CD4-positive, alpha-beta memory T cell (primary cell): ENCODE measurements at regions of chr22 and their contacts with region 1.

Region 1: DNA sequence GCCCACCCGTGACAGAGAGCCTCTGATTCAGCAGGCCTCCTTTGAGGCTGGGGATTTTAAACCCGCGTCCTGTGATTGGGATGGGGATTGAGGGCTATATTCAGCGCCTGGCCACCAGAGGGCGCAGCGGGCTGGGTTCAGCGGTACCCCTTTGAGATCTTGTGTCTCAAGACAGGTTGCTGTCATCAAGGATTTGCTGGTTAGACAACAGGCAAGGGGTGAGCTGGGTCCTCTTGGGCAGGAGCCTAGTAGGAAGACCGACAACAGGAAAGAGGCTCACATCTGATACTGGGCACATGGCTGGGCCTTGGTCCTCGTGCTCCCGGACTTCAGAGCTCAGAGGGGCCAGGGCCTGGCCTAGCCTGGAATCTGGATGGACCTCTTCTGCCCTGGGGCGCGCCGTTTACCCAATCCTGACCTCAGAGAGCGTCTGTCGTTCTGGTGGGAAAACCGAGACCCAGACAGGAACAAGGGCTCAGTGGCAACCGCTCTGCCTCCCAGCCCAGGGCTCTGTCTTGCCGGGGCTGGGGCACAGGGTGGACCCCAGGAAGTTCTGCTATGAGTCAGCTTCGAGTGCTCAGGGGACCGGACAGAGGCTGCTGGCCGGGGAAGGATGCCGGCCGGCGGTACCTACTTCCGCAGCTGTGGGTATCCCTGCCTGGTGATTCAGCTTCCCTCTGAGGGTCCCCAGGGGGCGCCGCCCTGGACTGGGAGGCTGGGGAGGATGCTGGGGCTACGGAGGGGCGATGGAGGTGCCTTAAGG is 929 bp upstream of the SLC35E4 start:
- DNase-seq: peak; percentile 84 to 87 (median 86)
- H3K4me3 ChIP-seq: peak overlapping the region; percentile 81 to 91
- H3K4me3 Mint-ChIP-seq: peak overlapping the region; percentile 81 to 95 (median 84)
- H3K27ac ChIP-seq: peak overlapping the region; percentile 79
- H3K27ac Mint-ChIP-seq: peak overlapping the region; percentile 88 to 98 (median 93)
- H3K4me1 ChIP-seq: peaks cover 34% of the 10 kb centered on the region
- H3K4me1 Mint-ChIP-seq: peaks cover 10 to 29% (median 16%) of the 10 kb centered on the region in 4 donors
- H3K27me3 ChIP-seq: no peaks in the 10 kb centered on the region
- H3K27me3 Mint-ChIP-seq: no peaks in the 10 kb centered on the region

Region 2: DNA sequence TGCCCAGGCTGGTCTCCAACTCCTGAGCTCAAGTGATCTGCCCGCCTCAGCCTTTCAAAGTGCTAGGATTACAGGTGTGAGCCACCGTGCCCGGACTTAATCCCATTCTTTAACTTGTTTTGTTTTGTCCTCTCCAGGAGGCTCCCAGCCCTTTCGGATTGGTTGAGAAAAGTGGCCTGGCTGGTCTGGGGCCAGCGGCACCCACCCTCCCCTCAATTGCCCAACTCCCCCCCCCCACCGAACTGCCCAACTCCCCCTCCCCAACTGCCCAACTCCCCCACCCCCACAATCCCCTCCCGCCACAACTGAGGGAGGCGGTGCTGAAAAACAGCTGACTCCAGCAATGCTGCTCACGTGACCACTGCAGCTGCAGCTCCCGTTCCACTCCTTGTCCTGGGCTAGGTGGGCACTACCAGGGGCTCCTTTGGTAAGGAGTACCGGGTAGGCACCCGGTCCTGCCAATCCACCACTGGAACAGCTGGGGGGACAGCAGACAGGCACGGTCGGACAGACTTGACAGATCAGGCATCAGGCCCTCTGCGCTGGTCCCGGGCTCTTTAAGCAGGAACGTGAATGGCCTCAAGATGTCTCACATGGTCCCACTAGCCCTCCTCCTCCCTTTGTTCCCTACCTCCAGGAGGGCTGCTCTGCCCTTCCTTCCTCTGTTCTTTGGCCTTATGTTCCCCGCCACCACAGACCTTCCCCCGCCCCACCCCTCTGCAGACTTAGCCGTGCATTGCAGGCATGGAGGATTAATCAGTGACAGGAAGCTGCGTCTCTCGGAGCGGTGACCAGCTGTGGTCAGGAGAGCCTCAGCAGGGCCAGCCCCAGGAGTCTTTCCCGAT is 28.0 kb before region 1 on chr22 and contains the start of gene TCN2:
- CTCF ChIA-PET with region 1: interaction called, 14 read pairs
- POLR2A ChIA-PET with region 1: interaction called, 11 read pairs
- intact Hi-C with region 1: no loop called
- DNase-seq: peak; percentile 13 to 57 (median 18)
- H3K4me3 ChIP-seq: peak within 1 kb of the TSS; percentile 57 to 81
- H3K4me3 Mint-ChIP-seq: peak within 1 kb of the TSS; percentile 86 to 94 (median 90)
- H3K27ac ChIP-seq: no peak within 1 kb of the TSS
- H3K27ac Mint-ChIP-seq: peak within 1 kb of the TSS in 6 of 7 donors; percentile 50 to 92 (median 64)
- H3K4me1 ChIP-seq: peaks cover 16% of the 10 kb centered on the region
- H3K4me1 Mint-ChIP-seq: peaks cover 11 to 30% (median 20%) of the 10 kb centered on the region in 4 donors
- H3K27me3 ChIP-seq: no peaks in the 10 kb centered on the region
- H3K27me3 Mint-ChIP-seq: peaks cover 0 to 1% of the 10 kb centered on the region in 2 donors
- total RNA-seq, gene TCN2: 0.93 to 1.2 TPM

Region 3: GRCh38 chr22:30673136-30673535 is 38.5 kb after region 1 on chr22:
- CTCF ChIA-PET with region 1: interaction called, 22 read pairs
- POLR2A ChIA-PET with region 1: interaction called, 24 read pairs
- intact Hi-C with region 1: no loop called
- DNase-seq: no peak
- H3K4me3 ChIP-seq: no peak overlapping the region
- H3K4me3 Mint-ChIP-seq: no peak overlapping the region
- H3K27ac ChIP-seq: no peak overlapping the region
- H3K27ac Mint-ChIP-seq: no peak overlapping the region
- H3K4me1 ChIP-seq: peaks cover 5% of the 10 kb centered on the region
- H3K4me1 Mint-ChIP-seq: peaks cover 4 to 6% (median 4%) of the 10 kb centered on the region in 4 donors
- H3K27me3 ChIP-seq: no peaks in the 10 kb centered on the region
- H3K27me3 Mint-ChIP-seq: peaks cover 8% of the 10 kb centered on the region in 2 donors

Region 4: DNA sequence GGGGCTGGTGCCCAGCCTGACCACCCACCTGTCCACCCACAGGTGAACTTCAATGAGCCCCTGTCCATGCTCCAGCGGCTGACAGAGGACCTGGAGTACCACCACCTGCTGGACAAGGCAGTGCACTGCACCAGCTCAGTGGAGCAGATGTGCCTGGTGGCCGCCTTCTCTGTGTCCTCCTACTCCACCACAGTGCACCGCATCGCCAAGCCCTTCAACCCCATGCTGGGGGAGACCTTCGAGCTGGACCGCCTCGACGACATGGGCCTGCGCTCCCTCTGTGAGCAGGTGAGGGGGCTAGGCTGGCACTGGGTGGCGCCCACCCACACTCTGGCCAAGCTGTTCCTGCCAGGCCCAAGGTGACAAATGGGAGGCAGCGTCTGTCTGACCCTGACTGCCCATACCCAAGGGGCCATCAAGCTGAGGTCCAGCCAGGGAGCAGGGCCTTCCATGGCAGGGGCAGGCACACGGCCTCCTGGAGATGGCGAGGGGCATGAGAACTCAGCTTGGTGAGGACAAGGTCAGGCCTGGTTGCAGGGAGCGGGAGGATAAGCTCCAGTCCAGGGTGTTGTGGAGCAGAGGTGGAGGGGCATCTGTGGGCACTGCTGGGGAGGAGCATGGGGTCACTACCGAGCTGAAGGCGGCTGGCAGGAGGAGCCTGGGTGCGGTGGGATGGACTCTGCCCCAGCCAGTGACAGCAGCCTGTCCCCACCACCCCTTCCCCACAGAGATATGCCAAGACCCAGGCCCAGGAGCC is 256.2 kb after region 1 on chr22:
- CTCF ChIA-PET with region 1: interaction called, 25 read pairs
- POLR2A ChIA-PET with region 1: no interaction called
- intact Hi-C with region 1: loop called (anchors 1 kb)
- DNase-seq: peak in 3 of 5 donors; percentile 17 to 23 (median 21)
- H3K4me3 ChIP-seq: no peak overlapping the region
- H3K4me3 Mint-ChIP-seq: no peak overlapping the region
- H3K27ac ChIP-seq: no peak overlapping the region
- H3K27ac Mint-ChIP-seq: no peak overlapping the region
- H3K4me1 ChIP-seq: peaks cover 24% of the 10 kb centered on the region
- H3K4me1 Mint-ChIP-seq: peaks cover 15 to 39% (median 28%) of the 10 kb centered on the region in 4 donors
- H3K27me3 ChIP-seq: no peaks in the 10 kb centered on the region
- H3K27me3 Mint-ChIP-seq: no peaks in the 10 kb centered on the region

Region 5: DNA sequence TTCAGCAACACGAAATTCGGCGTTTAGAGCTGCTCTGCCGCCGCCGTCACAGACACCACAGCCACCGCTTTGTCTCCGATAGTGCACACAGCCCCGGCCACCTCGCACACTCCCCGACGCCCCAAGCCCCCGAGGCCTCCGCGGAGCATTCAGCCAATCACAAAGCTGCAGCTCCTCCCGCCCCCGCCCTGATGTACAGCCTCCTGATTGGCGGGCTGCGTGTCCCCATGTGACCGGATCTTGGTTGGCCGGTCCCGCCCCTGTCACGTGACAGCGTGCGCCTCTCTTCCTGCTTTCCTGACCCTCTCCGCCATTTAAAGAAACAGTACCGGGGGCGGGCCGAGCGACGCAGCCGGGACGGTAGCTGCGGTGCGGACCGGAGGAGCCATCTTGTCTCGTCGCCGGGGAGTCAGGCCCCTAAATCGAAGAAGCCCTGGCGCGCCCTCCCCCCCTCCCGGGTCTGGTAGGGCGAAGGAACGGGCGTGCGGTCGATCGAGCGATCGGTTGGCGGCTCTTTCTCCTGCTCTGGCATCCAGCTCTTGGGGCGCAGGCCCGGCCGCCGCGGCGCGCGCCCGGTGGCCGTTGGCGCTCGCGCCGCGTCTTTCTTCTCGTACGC is 334.4 kb after region 1 on chr22 and contains the start of gene TUG1:
- CTCF ChIA-PET with region 1: no interaction called
- POLR2A ChIA-PET with region 1: interaction called, 9 read pairs
- intact Hi-C with region 1: loop called (anchors 1 kb)
- DNase-seq: peak; percentile 97 to 99 (median 98)
- H3K4me3 ChIP-seq: peak within 1 kb of the TSS; percentile 68 to 80
- H3K4me3 Mint-ChIP-seq: peak within 1 kb of the TSS; percentile 89 to 96 (median 94)
- H3K27ac ChIP-seq: peak within 1 kb of the TSS; percentile 90
- H3K27ac Mint-ChIP-seq: peak within 1 kb of the TSS; percentile 94 to 98 (median 97)
- H3K4me1 ChIP-seq: peaks cover 39% of the 10 kb centered on the region
- H3K4me1 Mint-ChIP-seq: peaks cover 30 to 69% (median 52%) of the 10 kb centered on the region in 4 donors
- H3K27me3 ChIP-seq: no peaks in the 10 kb centered on the region
- H3K27me3 Mint-ChIP-seq: no peaks in the 10 kb centered on the region
- total RNA-seq, gene TUG1: 129 to 132 TPM

Region 6: DNA sequence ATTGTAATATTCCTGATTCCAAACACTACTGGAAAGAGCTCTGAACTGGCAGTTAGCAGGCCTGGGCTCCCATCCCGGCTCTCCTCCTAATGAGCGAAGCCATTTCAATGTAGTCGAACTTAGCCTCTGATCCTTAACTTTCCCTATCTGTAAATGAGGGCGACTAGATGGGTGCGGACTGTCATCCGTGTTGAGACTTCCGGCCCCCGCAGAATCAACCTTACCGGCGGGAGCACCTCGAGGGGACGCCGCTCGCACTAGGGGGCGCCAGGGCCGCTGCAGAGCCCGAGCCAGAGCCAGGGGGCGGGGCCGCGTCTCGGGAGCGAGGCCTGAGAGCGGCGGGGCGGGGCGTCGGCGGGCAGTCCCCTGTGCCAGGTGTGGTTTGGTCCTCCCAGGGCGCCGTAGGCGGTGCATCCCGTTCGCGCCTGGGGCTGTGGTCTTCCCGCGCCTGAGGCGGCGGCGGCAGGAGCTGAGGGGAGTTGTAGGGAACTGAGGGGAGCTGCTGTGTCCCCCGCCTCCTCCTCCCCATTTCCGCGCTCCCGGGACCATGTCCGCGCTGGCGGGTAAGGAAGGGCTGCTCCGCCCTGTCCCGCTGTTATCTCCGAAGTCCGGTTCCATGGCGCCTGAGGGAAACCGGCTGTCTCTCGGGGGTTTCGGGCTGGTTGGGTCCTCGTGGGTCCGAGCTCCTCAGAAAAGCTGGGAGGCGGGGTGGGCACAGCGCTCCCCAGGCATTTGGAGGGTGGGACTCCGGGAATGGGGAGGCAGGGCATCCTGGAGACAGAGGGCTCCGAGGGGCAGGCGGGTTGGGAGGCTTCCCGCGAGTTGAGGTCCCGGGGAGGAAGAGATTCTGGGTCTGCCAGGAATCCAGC is 577.4 kb after region 1 on chr22 and contains the start of gene LIMK2:
- CTCF ChIA-PET with region 1: no interaction called
- POLR2A ChIA-PET with region 1: interaction called, 3 read pairs
- intact Hi-C with region 1: loop called (anchors 2 kb)
- DNase-seq: peak; percentile 93 to 94 (median 94)
- H3K4me3 ChIP-seq: peak within 1 kb of the TSS; percentile 74 to 92
- H3K4me3 Mint-ChIP-seq: peak within 1 kb of the TSS; percentile 89 to 98 (median 90)
- H3K27ac ChIP-seq: peak within 1 kb of the TSS; percentile 81
- H3K27ac Mint-ChIP-seq: peak within 1 kb of the TSS; percentile 76 to 97 (median 94)
- H3K4me1 ChIP-seq: peaks cover 61% of the 10 kb centered on the region
- H3K4me1 Mint-ChIP-seq: peaks cover 43 to 68% (median 50%) of the 10 kb centered on the region in 4 donors
- H3K27me3 ChIP-seq: no peaks in the 10 kb centered on the region
- H3K27me3 Mint-ChIP-seq: no peaks in the 10 kb centered on the region
- total RNA-seq, gene LIMK2: 32.2 to 33.2 TPM